Vagina (tissue), 2 donors: ENCODE measurements at regions of chr9 and their contacts with region 1.

Region 1: DNA sequence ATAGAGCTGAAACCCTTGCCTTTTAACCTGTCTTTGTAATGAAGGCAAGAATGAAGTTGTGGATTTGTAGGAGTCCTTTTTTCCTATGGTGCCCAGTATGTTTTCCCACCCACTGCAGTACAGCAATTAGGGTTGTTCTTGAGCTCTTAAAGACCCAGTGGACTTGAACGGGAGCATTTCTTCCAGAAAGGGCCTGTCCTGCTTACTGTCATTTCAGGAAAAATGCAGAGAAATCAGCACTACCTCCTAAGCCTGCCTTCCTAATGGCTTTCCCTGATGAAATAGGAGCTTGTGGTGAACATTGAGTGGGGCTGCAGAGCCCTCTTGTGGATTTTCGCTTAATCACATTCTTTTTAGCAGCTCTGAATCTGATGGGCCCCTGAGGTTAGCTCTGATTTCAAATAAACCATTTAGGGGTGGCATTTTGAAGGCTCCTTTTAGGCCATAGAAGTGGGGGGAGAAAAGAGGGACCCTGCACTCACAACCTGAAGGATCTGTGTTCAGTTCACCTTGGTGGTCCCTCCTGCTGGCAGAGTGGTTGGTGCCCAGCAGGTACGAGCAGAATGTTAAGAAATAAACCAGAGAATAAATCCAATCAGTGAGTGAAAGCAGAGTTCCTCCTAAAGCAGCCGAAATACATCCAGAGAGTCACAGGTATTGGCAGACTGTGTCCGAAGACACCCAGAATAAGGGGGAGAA is 188.0 kb upstream of the KLF9 start:
- DNase-seq: no peak
- H3K4me3 ChIP-seq: peak overlapping the region in 1 of 2 donors; percentile 19
- H3K27ac ChIP-seq: peak overlapping the region; percentile 89
- H3K4me1 ChIP-seq: peaks cover 31% of the 10 kb centered on the region
- H3K27me3 ChIP-seq: no peaks in the 10 kb centered on the region
- CTCF ChIP-seq: peak in 2 of 3 experiments; percentile 78 to 93
- POLR2A ChIP-seq: no peak

Region 2: DNA sequence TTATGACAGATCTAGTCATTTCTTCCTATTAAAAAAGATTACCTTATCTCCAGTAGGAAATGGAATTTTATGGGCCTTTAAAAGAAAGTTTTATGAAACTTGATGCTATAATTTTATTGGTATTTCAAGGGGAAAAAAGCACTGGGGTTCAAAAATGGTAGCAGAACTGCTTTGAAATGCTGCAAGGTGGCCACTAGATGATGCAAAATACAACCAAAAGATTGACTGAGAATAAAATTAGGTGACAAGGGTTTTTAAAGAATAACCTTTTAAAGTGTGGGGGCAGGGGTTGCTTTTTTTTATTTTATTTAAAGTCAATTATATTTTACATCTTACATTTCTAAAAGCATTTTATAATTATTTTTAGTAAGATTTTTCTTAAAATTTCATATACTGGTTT is 249.7 kb before region 1 on chr9:
- intact Hi-C with region 1: loop called (anchors 5 kb)
- DNase-seq: no peak
- H3K4me3 ChIP-seq: no peak overlapping the region
- H3K27ac ChIP-seq: no peak overlapping the region
- H3K4me1 ChIP-seq: peaks cover 10% of the 10 kb centered on the region
- H3K27me3 ChIP-seq: no peaks in the 10 kb centered on the region
- CTCF ChIP-seq: peak; percentile 25 to 60 (median 37)
- POLR2A ChIP-seq: no peak

Region 3: GRCh38 chr9:70419546-70420266 is 182.8 kb before region 1 on chr9:
- intact Hi-C with region 1: loop called (anchors 2 kb)
- DNase-seq: peak in 1 of 2 donors; percentile 99
- H3K4me3 ChIP-seq: peak overlapping the region; percentile 56 to 71
- H3K27ac ChIP-seq: peak overlapping the region; percentile 100
- H3K4me1 ChIP-seq: peaks cover 54% of the 10 kb centered on the region
- H3K27me3 ChIP-seq: no peaks in the 10 kb centered on the region
- CTCF ChIP-seq: no peak
- POLR2A ChIP-seq: peak in 1 of 2 donors; percentile 73

Region 4: GRCh38 chr9:70466976-70467561 is 135.4 kb before region 1 on chr9:
- intact Hi-C with region 1: no loop called
- DNase-seq: no peak
- H3K4me3 ChIP-seq: no peak overlapping the region
- H3K27ac ChIP-seq: no peak overlapping the region
- H3K4me1 ChIP-seq: peaks cover 21% of the 10 kb centered on the region
- H3K27me3 ChIP-seq: no peaks in the 10 kb centered on the region
- CTCF ChIP-seq: no peak
- POLR2A ChIP-seq: no peak

Region 5: DNA sequence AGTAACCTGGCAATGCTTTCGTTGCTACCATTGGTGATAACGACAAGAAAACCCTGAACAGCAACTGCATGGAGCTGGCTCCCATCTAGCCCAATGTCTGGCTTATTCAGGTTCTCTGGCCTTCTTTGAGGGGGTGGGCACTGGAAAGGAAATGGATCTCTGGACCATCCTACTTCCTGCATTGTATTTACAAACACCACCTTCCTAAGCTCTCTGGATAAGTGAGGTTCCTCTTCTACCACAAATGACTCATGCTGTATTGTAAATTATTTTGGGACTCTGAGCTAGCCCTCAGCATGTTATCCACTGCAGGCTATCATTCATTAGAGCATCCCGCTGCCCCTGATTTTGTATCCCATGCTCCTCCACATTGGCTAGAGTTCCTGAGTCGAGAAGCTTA is 51.1 kb before region 1 on chr9:
- intact Hi-C with region 1: no loop called
- DNase-seq: no peak
- H3K4me3 ChIP-seq: no peak overlapping the region
- H3K27ac ChIP-seq: no peak overlapping the region
- H3K4me1 ChIP-seq: peaks cover 15% of the 10 kb centered on the region
- H3K27me3 ChIP-seq: no peaks in the 10 kb centered on the region
- CTCF ChIP-seq: no peak
- POLR2A ChIP-seq: no peak

Region 6: DNA sequence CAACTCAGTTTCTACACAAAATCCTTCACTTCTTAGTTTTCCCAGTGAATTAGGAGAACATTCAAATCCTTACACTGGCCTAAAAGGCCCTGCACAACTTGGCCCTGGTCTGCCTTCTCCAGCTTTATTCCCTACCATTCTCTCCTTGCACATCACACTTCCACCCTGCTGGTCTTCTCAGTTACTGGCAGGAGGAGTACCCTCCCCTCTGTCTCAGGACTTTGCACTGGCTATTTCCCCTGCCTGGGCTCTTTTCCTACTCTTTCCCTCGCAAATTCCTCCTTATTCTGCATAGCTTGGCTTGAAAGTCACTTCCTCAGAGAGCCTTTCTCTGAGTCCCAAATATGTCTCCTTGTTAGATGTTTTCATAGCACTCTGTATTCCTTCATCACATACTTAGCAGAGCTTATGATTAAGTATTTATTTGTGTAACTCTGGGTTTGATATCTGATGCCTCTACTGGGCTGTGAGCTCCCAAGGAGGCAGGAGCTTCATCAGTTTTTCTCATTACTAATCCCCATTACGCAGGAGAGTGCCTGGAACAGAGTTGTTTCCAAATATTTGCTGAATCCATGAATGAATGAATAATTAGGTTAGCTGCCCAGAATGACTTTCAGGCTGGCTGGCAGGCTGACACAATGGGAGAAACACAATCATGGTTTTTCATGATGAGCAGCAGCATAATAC is 28.2 kb before region 1 on chr9:
- intact Hi-C with region 1: loop called (anchors 2 kb)
- DNase-seq: peak in 1 of 2 donors; percentile 88
- H3K4me3 ChIP-seq: no peak overlapping the region
- H3K27ac ChIP-seq: peak overlapping the region; percentile 42
- H3K4me1 ChIP-seq: peaks cover 27% of the 10 kb centered on the region
- H3K27me3 ChIP-seq: no peaks in the 10 kb centered on the region
- CTCF ChIP-seq: no peak
- POLR2A ChIP-seq: no peak

Region 7: DNA sequence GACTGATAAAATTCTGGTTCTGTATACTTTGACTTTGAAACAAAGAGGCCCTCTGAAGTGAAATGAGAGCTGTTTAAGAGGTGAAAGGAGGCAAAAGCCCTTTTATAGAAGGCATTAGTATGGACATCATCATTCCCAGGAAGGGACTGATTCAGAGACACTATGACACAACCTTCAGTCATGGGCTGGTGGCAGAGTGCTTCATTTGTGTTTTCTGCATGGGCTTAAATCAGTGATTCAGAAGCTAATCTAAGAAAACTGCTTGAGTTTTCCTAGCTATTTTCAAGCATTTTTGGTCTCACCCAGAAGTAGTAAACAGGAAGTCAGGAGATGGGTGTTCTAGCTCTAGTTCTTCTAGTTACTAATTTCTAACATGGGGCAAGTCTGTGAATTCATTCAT is 230.0 kb after region 1 on chr9:
- intact Hi-C with region 1: no loop called
- DNase-seq: no peak
- H3K4me3 ChIP-seq: no peak overlapping the region
- H3K27ac ChIP-seq: no peak overlapping the region
- H3K4me1 ChIP-seq: no peaks in the 10 kb centered on the region
- H3K27me3 ChIP-seq: no peaks in the 10 kb centered on the region
- CTCF ChIP-seq: no peak
- POLR2A ChIP-seq: no peak

Region 8: DNA sequence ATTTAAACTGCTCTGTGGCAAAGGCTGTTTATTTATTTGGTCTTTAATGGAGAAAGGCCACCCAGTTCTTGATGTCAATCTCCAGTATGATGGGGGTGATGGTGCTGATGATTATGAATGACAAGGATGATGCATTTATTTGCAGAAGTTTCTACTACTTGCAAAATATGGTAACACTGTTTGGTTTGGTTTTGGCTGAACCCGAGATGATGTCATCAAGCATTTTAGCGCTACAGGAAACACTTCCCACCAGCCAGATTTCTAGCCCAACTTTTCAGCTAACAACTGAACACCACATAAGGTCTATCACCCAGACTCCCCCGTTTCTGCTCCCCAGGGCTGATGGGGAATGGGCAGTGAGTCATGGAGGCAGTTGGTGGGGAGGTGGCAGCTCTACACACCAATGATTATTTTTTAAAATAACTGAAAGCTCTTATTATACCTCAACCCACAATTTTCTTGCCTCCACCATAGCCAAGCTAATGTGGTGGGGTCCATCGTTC is 862.9 kb after region 1 on chr9:
- intact Hi-C with region 1: no loop called
- DNase-seq: no peak
- H3K4me3 ChIP-seq: no peak overlapping the region
- H3K27ac ChIP-seq: no peak overlapping the region
- H3K4me1 ChIP-seq: no peaks in the 10 kb centered on the region
- H3K27me3 ChIP-seq: no peaks in the 10 kb centered on the region
- CTCF ChIP-seq: no peak
- POLR2A ChIP-seq: no peak